IMR-90 (cell line): ENCODE measurements at regions of chr19 and their contacts with region 1.

Region 1: GRCh38 chr19:14599548-14600147 is 16.8 kb downstream of the CLEC17A start:
- DNase-seq: no peak
- ATAC-seq: no peak
- H3K4me3 ChIP-seq: no peak overlapping the region
- H3K27ac ChIP-seq: no peak overlapping the region
- H3K4me1 ChIP-seq: no peaks in the 10 kb centered on the region
- H3K27me3 ChIP-seq: no peaks in the 10 kb centered on the region
- CTCF ChIP-seq: no peak
- POLR2A ChIP-seq: no peak
- RAD21 ChIP-seq: no peak

Region 2: GRCh38 chr19:14517840-14518505 is 81.7 kb before region 1 on chr19 and contains the start of gene DNAJB1:
- CTCF ChIA-PET with region 1: no interaction called
- POLR2A ChIA-PET with region 1: no interaction called
- dilution Hi-C with region 1: no loop called
- in situ Hi-C with region 1: no loop called
- intact Hi-C with region 1: no loop called
- DNase-seq: peak; percentile 64
- ATAC-seq: peak; percentile 80
- H3K4me3 ChIP-seq: peak within 1 kb of the TSS; percentile 85
- H3K27ac ChIP-seq: peak within 1 kb of the TSS; percentile 90
- H3K4me1 ChIP-seq: peaks cover 19% of the 10 kb centered on the region
- H3K27me3 ChIP-seq: no peaks in the 10 kb centered on the region
- CTCF ChIP-seq: no peak
- POLR2A ChIP-seq: peak; percentile 99
- RAD21 ChIP-seq: no peak
- total RNA-seq, gene DNAJB1: 82.5 and 88.2 TPM in 2 replicates

Region 3: GRCh38 chr19:14616407-14616806 is 16.8 kb after region 1 on chr19:
- CTCF ChIA-PET with region 1: no interaction called
- POLR2A ChIA-PET with region 1: interaction called, 17 read pairs
- dilution Hi-C with region 1: no loop called
- in situ Hi-C with region 1: no loop called
- intact Hi-C with region 1: no loop called
- DNase-seq: no peak
- ATAC-seq: no peak
- H3K4me3 ChIP-seq: no peak overlapping the region
- H3K27ac ChIP-seq: no peak overlapping the region
- H3K4me1 ChIP-seq: no peaks in the 10 kb centered on the region
- H3K27me3 ChIP-seq: no peaks in the 10 kb centered on the region
- CTCF ChIP-seq: no peak
- POLR2A ChIP-seq: no peak
- RAD21 ChIP-seq: no peak